Left cardiac atrium (tissue), 4 donors: ENCODE measurements at regions of chr14 and their contacts with region 1.

Region 1: GRCh38 chr14:24058260-24058950 is 6.6 kb downstream of the CARMIL3 start:
- DNase-seq: peak; percentile 63
- ATAC-seq: peak; percentile 77 to 82

Region 2: GRCh38 chr14:24093901-24094761 is 35.7 kb after region 1 on chr14 and contains the start of gene PCK2:
- intact Hi-C with region 1: loop called (anchors 2 to 5 kb)
- DNase-seq: peak; percentile 94
- ATAC-seq: peak; percentile 88 to 95
- total RNA-seq, gene PCK2: 11.5 to 13.0 TPM

Region 3: GRCh38 chr14:24108336-24108874 is 50.0 kb after region 1 on chr14:
- intact Hi-C with region 1: loop called in 1 of 2 experiments (anchors 5 kb)
- DNase-seq: no peak
- ATAC-seq: no peak

Region 4: DNA sequence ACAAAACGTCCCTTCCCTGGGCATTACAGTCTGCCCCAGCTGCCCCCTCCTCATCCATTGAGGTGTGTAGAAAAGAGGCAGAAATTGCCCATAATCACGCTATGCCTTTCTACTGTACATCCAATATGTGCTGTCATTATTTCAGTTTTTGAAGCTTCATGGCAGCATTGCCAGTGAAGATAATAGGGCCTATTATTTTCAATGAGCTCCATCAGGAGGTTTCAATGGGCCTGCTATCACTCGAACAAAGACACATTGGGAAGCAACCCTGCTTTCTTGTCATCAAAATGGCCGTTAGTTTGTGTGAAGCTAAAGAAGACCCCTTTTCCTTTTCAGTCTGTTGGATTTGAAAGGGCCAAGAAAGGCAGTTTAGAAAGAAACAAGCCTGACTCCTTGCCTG is 1885.6 kb after region 1 on chr14:
- intact Hi-C with region 1: no loop called
- DNase-seq: no peak
- ATAC-seq: no peak